AG04449 (cell line): ENCODE measurements at regions of chr5 and their contacts with region 1.

Region 1: GRCh38 chr5:175534070-175534932 is 55.9 kb downstream of the SFXN1 start:
- DNase-seq: peak; percentile 24
- H3K4me3 ChIP-seq: peak overlapping the region; percentile 29
- CTCF ChIP-seq: peak; percentile 100

Region 2: DNA sequence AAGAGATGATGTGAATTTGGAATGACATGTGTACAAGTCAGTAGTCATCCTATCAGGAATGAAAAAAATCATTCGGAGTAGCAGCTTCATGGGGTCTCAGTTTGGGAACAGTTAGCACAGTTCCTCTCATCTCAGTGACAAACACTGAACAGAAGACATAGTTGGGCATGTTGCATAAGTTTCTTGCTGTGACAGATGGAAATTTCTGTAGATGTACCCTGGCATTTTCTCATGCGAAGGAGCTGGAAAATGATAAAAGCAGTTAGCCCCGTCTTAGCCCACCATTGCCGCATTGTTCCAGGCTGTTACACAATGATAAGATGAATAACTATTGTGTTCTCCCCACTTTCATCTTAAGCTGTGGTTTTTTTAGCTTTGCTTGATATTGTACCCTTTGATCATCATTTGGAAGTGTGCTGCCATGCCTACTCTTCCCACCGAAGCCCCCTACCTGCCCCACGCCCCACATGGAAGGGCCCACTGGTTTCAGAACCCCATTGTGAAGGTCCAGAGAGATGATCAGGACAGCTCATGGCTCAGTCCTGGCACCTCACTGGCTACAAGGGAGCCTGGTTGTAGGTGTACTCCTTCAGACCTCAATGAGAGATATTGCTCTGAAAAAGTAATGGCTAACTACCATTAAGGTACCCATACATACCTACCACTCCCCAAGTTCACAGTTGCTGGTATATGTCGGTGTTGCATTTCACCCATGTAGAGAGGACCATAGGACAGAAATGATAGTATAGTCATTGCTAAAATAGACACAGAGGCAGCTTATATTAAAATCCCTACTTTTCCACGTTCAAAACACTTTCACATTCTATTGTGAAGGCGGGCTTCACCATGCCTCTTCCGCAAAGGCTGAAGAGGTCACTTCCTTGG is 17.1 kb before region 1 on chr5:
- CTCF ChIA-PET with region 1: interaction called, 10 read pairs
- POLR2A ChIA-PET with region 1: no interaction called
- DNase-seq: no peak
- H3K4me3 ChIP-seq: no peak overlapping the region
- CTCF ChIP-seq: no peak

Region 3: DNA sequence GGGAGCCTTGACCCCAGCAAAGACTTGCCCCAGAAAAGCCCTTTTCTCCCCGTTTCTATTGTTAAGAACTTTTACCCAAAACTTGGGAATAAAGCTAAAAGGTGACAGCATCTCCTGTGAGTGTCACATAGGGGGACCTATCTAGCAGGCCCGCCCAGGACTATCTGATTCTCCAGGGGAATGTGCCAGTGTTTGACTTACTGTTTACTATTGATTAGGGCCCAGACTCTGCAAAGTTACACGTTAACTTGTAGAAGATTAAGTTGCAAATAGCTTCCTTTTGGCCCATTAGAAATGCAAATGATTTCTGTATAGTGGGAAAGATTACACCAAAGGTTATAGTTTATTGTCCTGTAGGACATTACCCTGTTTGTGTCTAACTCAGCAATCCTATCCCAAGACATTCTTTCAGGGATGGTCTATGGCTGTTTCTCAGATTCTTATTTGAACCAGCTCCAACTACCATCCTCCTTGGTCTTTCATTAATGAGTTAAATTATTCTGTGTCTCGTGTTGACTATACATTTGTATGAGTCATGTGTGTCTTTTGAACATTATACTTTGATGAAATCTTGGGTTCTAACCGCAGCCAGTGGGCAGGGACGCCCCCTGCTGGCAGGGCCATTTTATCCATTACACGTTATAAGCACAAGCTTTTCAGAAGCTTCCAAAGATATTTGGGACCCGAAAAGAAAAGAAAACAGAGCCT is 184.3 kb after region 1 on chr5:
- CTCF ChIA-PET with region 1: interaction called, 38 read pairs
- POLR2A ChIA-PET with region 1: no interaction called
- DNase-seq: no peak
- H3K4me3 ChIP-seq: no peak overlapping the region
- CTCF ChIP-seq: no peak

Region 4: GRCh38 chr5:175729829-175730277 is 195.6 kb after region 1 on chr5:
- CTCF ChIA-PET with region 1: interaction called, 23 read pairs
- POLR2A ChIA-PET with region 1: no interaction called
- DNase-seq: peak; percentile 29
- H3K4me3 ChIP-seq: no peak overlapping the region
- CTCF ChIP-seq: peak; percentile 97